Heart right ventricle (tissue), 16 donors: ENCODE measurements at regions of chr6 and their contacts with region 1.

Region 1: DNA sequence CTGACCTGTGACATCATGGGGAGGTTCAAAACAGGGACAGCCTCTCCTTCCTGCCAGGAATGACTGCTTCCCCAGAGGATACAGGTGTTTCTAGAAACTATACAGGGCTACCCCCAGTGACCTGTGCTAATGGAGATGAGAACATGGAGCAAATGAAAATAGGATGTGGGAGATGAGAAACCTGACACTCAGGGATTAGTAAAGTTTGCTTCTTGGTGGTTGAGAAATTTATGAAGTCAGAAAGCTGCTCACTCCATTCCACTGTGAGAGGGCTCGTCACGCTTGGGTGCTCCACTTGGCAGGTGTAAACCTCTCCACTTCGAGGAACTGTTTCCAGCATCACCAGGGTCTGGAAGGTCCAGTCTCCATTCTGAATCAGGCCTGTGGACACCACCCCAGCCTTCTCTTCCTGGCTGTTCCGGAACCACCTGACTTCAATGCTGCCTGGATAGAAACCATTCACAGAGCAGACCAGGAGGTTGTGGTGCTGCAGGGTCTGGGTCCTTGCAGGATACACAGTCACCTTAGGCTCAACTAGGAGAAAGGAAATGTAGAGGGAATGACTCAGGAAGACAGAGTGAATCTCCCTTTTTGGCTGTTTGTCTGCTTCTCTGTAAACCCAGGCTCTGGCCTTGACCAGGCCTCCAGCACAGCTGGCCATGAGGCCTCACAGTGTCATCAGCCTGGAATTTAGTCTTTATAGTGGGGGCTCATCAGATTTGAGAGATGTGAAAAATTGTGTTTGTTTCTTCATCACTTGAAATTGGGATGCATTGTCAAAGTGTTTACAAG is 10.8 kb downstream of the HLA-DRB5 start:
- DNase-seq: no peak
- ATAC-seq: no peak
- H3K4me3 ChIP-seq: no peak overlapping the region
- H3K27ac ChIP-seq: no peak overlapping the region
- H3K4me1 ChIP-seq: peaks cover 0 to 10% (median 0%) of the 10 kb centered on the region in 9 donors
- H3K27me3 ChIP-seq: peaks cover 0 to 17% (median 0%) of the 10 kb centered on the region in 7 donors
- CTCF ChIP-seq: no peak

Region 2: GRCh38 chr6:32581315-32582095 is 62.2 kb after region 1 on chr6:
- intact Hi-C with region 1: loop called in 4 of 10 experiments (anchors 5 to 10 kb)
- DNase-seq: no peak
- ATAC-seq: no peak
- H3K4me3 ChIP-seq: no peak overlapping the region
- H3K27ac ChIP-seq: no peak overlapping the region
- H3K4me1 ChIP-seq: peaks cover 0 to 13% (median 0%) of the 10 kb centered on the region in 9 donors
- H3K27me3 ChIP-seq: peaks cover 0 to 23% (median 0%) of the 10 kb centered on the region in 7 donors
- CTCF ChIP-seq: no peak